ENCODE measurements at regions of chr18 and their contacts with region 1.

Region 1: DNA sequence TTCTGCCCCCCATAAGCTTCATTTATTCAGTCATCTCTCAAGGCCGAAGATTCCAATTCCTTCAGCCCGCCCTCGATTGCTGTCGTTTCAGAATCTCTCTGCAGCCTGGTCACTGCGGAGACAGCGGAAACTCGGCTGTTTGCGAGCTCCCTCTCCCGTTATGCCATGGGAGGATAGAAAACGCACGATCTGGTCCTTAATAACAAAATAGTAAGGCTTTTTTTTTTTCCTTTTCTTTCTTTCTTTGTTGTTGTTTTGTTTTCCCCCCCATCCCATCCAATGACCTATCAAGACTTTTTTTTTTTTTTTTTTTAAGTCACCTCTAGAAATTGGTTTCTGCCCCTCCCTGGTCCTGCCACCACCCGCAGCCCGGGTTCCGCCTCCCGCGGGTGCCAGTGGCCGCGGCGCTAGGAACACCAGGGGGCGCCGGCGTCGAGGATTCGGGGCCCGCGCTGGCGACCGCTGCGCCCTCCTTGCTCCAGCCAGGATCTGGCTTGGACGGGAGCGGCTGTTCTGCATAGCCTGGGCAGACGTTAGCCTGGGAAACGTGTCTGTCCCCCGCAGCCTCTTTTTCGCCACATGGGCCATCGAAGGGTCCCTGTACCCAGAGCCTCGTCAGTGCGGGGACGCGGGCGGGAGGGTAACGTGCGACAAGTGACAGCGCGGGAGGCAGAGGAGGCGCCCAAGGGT is 10.1 kb downstream of the CPLX4 start:
- DNase-seq: peak; percentile 69
- ATAC-seq: peak; percentile 96
- H3K4me3 Mint-ChIP-seq: peak overlapping the region; percentile 43
- H3K27ac Mint-ChIP-seq: no peak overlapping the region
- H3K4me1 Mint-ChIP-seq: no peaks in the 10 kb centered on the region
- H3K27me3 Mint-ChIP-seq: peaks cover 61% of the 10 kb centered on the region

Region 2: DNA sequence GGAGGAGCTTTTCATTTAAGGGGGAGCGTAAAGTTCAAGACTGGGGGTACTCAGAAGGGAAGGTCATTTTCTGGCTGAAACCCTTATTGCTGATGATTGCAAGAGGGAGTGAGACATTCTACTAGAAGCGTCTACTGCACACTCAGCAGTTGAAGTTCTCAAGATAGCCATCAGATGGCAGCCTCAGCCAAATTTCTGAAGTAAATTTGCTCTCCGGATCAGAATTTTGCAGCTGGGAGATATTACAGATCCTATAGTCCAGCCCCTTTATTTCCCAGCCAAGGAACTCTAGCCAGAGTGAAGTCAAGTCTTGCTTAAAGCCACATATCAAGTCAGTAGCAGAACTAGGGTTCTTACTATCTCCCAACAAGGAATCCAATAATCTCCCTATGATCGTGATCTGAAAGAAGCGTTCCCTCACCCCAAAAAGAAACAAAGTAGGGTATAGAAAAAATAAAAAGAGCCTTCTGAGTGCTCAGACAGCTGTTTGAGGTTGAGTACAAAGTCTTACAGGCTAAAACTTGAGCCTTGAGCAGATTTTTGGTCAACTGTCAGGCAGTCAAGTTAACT is 59.1 kb before region 1 on chr18:
- CTCF ChIA-PET with region 1: interaction called, 12 read pairs
- DNase-seq: peak; percentile 50
- ATAC-seq: no peak
- H3K4me3 Mint-ChIP-seq: no peak overlapping the region
- H3K27ac Mint-ChIP-seq: no peak overlapping the region
- H3K4me1 Mint-ChIP-seq: no peaks in the 10 kb centered on the region
- H3K27me3 Mint-ChIP-seq: peaks cover 75% of the 10 kb centered on the region

Region 3: DNA sequence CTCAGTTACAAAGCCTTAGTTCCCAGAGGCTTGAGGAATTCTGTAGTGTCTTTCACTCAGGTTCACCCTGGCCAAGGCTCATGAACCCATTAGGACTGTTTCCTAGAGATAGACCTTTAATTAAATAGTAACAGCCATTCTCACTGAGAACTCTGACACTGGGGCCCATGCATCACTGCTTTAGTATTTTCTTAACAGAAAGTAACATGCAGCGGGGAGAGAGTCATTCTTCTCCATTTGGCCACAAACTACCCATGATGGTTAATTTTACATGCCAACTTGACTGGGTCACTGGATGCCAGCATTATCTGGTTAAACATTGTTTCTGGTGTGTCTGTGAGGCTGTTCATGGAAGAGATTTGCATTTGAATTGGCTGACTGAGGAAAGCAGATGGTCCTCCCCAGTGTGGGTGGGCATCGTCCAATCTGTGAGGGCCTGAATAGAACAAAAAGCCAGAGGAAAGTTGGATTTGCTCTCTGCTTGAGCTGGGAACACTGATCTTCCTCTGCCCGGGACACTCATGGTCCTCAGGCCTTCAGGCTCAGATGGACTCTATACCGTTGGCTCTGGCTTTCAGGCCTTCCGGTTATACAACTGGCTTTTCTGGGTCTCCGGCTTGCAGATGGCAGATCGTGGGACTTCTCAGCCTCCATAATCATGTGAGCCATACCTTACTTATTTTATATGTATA is 15.7 kb after region 1 on chr18:
- CTCF ChIA-PET with region 1: interaction called, 10 read pairs
- DNase-seq: no peak
- ATAC-seq: no peak
- H3K4me3 Mint-ChIP-seq: no peak overlapping the region
- H3K27ac Mint-ChIP-seq: no peak overlapping the region
- H3K4me1 Mint-ChIP-seq: no peaks in the 10 kb centered on the region
- H3K27me3 Mint-ChIP-seq: peaks cover 6% of the 10 kb centered on the region

Region 4: GRCh38 chr18:59382383-59382782 is 74.0 kb after region 1 on chr18:
- CTCF ChIA-PET with region 1: no interaction called
- DNase-seq: no peak
- ATAC-seq: no peak
- H3K4me3 Mint-ChIP-seq: no peak overlapping the region
- H3K27ac Mint-ChIP-seq: no peak overlapping the region
- H3K4me1 Mint-ChIP-seq: no peaks in the 10 kb centered on the region
- H3K27me3 Mint-ChIP-seq: peaks cover 21% of the 10 kb centered on the region